ENCODE measurements at regions of chr21 and their contacts with region 1.

Region 1: GRCh38 chr21:34510148-34511142 is 1.6 kb downstream of the KCNE1 start:
- H3K4me3 ChIP-seq: no peak overlapping the region
- H3K27ac ChIP-seq: no peak overlapping the region
- H3K4me1 ChIP-seq: no peaks in the 10 kb centered on the region
- CTCF ChIP-seq: peak; percentile 59; the same call in 1 of the 2 replicates

Region 2: GRCh38 chr21:34526618-34527290 is 16.3 kb after region 1 on chr21:
- CTCF ChIA-PET with region 1: interaction called, 18 read pairs
- POLR2A ChIA-PET with region 1: interaction called, 6 read pairs
- H3K4me3 ChIP-seq: peak overlapping the region; percentile 18
- H3K27ac ChIP-seq: peak overlapping the region; percentile 32; the same call in 1 of the 2 replicates
- H3K4me1 ChIP-seq: peaks cover 8% of the 10 kb centered on the region
- CTCF ChIP-seq: no peak

Region 3: GRCh38 chr21:34576041-34576511 is 65.6 kb after region 1 on chr21:
- CTCF ChIA-PET with region 1: interaction called, 10 read pairs
- POLR2A ChIA-PET with region 1: no interaction called
- H3K4me3 ChIP-seq: no peak overlapping the region
- H3K27ac ChIP-seq: no peak overlapping the region
- H3K4me1 ChIP-seq: peaks cover 4% of the 10 kb centered on the region; the same call in 1 of the 2 replicates
- CTCF ChIP-seq: no peak

Region 4: GRCh38 chr21:34613679-34614632 is 103.5 kb after region 1 on chr21:
- CTCF ChIA-PET with region 1: interaction called, 16 read pairs
- POLR2A ChIA-PET with region 1: no interaction called
- H3K4me3 ChIP-seq: peak overlapping the region; percentile 78
- H3K27ac ChIP-seq: peak overlapping the region; percentile 72; the same call in 1 of the 2 replicates
- H3K4me1 ChIP-seq: peaks cover 2% of the 10 kb centered on the region
- CTCF ChIP-seq: no peak

Region 5: DNA sequence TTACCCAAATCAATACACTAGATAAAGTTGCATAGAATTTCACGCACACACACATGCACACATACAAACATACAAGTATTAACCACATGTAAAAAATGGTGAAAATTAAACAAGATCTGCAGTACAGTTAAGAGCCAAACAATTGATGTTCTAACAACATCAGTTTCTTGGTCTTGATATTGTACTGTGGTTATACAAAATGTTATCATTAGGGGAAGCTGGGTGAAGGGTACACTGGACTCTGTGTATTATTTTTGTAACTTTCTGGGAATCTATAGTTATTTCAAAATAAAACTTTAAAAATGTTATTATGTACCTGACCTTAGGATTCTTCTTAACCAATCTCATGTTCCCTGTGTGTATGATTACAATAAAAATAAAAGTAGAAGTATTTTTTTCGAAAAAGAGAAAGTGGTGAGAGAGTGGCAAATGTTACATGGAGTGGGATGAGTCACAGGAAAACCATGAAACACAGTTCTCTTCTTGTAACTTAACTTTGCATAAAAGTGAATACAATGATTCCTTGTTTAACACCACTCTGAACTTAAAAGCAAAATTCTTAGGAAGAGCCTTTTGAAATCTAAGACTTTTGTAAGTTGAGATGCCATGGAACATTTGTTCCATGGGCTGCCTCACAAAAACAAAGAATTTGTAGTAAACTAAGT is 640.2 kb after region 1 on chr21:
- CTCF ChIA-PET with region 1: no interaction called
- POLR2A ChIA-PET with region 1: no interaction called
- H3K4me3 ChIP-seq: no peak overlapping the region
- H3K27ac ChIP-seq: no peak overlapping the region
- H3K4me1 ChIP-seq: no peaks in the 10 kb centered on the region
- CTCF ChIP-seq: no peak